ENCODE measurements at regions of chr17 and their contacts with region 1.

Region 1: GRCh38 chr17:79997011-79997660 is 38.5 kb downstream of the TBC1D16 start:
- DNase-seq: peak; percentile 46 to 96 (median 93)
- ATAC-seq: peak; percentile 97
- H3K4me3 ChIP-seq: peak overlapping the region; percentile 50
- H3K4me3 Mint-ChIP-seq: peak overlapping the region; percentile 72 to 88 (median 82)
- H3K27ac ChIP-seq: peak overlapping the region; percentile 85
- H3K27ac Mint-ChIP-seq: peak overlapping the region; percentile 92 to 99 (median 97)
- H3K4me1 ChIP-seq: peaks cover 39 to 45% of the 10 kb centered on the region in 2 donors
- H3K4me1 Mint-ChIP-seq: peaks cover 29 to 63% (median 46%) of the 10 kb centered on the region in 7 donors
- H3K27me3 ChIP-seq: no peaks in the 10 kb centered on the region
- H3K27me3 Mint-ChIP-seq: no peaks in the 10 kb centered on the region

Region 2: DNA sequence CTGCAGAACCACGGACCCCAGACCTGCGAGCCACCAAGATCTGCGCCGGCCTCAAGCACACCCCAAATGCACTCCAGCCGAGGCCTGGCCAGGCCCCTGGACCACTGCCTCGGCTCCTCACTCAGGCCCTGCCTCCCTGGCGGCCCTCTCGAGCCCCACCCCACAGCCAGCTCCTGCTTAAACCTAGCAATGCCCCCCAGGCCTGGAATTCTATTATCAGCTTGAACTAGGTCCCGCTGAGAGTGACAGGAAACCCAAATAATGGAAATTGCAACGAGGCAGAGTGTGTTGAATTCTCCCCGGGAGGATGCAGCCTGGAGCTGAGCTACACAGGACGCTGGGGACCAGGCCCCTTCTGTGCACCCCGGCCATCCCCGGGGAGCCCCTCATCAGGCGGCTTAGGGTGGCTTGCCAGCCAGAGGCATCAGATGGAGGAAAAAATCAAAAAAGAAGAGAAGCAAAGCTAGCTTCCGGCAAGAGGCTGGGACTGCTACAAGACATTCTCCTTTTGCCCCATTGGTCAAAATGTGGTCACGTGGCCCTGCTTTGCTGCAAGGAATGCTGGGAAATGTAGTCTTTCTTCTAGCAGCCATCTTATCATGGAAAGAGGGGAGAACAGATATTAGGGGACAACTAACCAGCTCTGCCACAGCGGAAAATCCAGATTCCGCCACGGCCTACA is 268.8 kb before region 1 on chr17:
- CTCF ChIA-PET with region 1: no interaction called
- POLR2A ChIA-PET with region 1: no interaction called
- intact Hi-C with region 1: loop called in 1 of 2 experiments (anchors 1 kb)
- DNase-seq: peak; percentile 62 to 91 (median 86)
- ATAC-seq: peak; percentile 91
- H3K4me3 ChIP-seq: peak overlapping the region; percentile 31
- H3K4me3 Mint-ChIP-seq: peak overlapping the region; percentile 53 to 85 (median 76)
- H3K27ac ChIP-seq: peak overlapping the region; percentile 56
- H3K27ac Mint-ChIP-seq: peak overlapping the region; percentile 72 to 92 (median 87)
- H3K4me1 ChIP-seq: peaks cover 4 to 12% of the 10 kb centered on the region in 2 donors
- H3K4me1 Mint-ChIP-seq: peaks cover 5 to 38% (median 21%) of the 10 kb centered on the region in 7 donors
- H3K27me3 ChIP-seq: no peaks in the 10 kb centered on the region
- H3K27me3 Mint-ChIP-seq: no peaks in the 10 kb centered on the region

Region 3: GRCh38 chr17:79796763-79797491 is 200.2 kb before region 1 on chr17 and contains the start of gene CBX8:
- CTCF ChIA-PET with region 1: no interaction called
- POLR2A ChIA-PET with region 1: interaction called, 10 read pairs
- intact Hi-C with region 1: loop called in 1 of 2 experiments (anchors 1 kb)
- DNase-seq: peak; percentile 97 to 99 (median 98)
- ATAC-seq: peak; percentile 95
- H3K4me3 ChIP-seq: peak within 1 kb of the TSS; percentile 54
- H3K4me3 Mint-ChIP-seq: peak within 1 kb of the TSS; percentile 84 to 92 (median 87)
- H3K27ac ChIP-seq: peak within 1 kb of the TSS; percentile 77
- H3K27ac Mint-ChIP-seq: peak within 1 kb of the TSS in 8 of 9 donors; percentile 75 to 95 (median 90)
- H3K4me1 ChIP-seq: peaks cover 31 to 39% of the 10 kb centered on the region in 2 donors
- H3K4me1 Mint-ChIP-seq: peaks cover 17 to 54% (median 34%) of the 10 kb centered on the region in 7 donors
- H3K27me3 ChIP-seq: peaks cover 29 to 32% of the 10 kb centered on the region in 2 donors
- H3K27me3 Mint-ChIP-seq: peaks cover 24 to 51% (median 34%) of the 10 kb centered on the region in 5 donors
- total RNA-seq, gene CBX8: 2.4 to 11.9 (median 3.0) TPM

Region 4: GRCh38 chr17:80008383-80008840 is 11.3 kb after region 1 on chr17:
- CTCF ChIA-PET with region 1: interaction called, 11 read pairs
- POLR2A ChIA-PET with region 1: interaction called, 3 read pairs
- intact Hi-C with region 1: loop called in 1 of 2 experiments (anchors 1 kb)
- DNase-seq: peak; percentile 30 to 82 (median 63)
- ATAC-seq: peak; percentile 89
- H3K4me3 ChIP-seq: no peak overlapping the region
- H3K4me3 Mint-ChIP-seq: no peak overlapping the region
- H3K27ac ChIP-seq: no peak overlapping the region
- H3K27ac Mint-ChIP-seq: peak overlapping the region in 1 of 9 donors; percentile 20
- H3K4me1 ChIP-seq: peaks cover 0 to 3% of the 10 kb centered on the region in 2 donors
- H3K4me1 Mint-ChIP-seq: peaks cover 5 to 13% (median 8%) of the 10 kb centered on the region in 7 donors
- H3K27me3 ChIP-seq: no peaks in the 10 kb centered on the region
- H3K27me3 Mint-ChIP-seq: no peaks in the 10 kb centered on the region

Region 5: GRCh38 chr17:80035943-80036714 is 39.0 kb after region 1 on chr17 and contains the start of gene CCDC40:
- CTCF ChIA-PET with region 1: no interaction called
- POLR2A ChIA-PET with region 1: no interaction called
- intact Hi-C with region 1: loop called in 1 of 2 experiments (anchors 1 kb)
- DNase-seq: peak; percentile 66 to 85 (median 78)
- ATAC-seq: peak; percentile 91
- H3K4me3 ChIP-seq: peak within 1 kb of the TSS; percentile 81
- H3K4me3 Mint-ChIP-seq: peak within 1 kb of the TSS; percentile 78 to 94 (median 85)
- H3K27ac ChIP-seq: peak within 1 kb of the TSS; percentile 76
- H3K27ac Mint-ChIP-seq: peak within 1 kb of the TSS; percentile 60 to 96 (median 84)
- H3K4me1 ChIP-seq: peaks cover 4 to 6% of the 10 kb centered on the region in 2 donors
- H3K4me1 Mint-ChIP-seq: peaks cover 5 to 18% (median 9%) of the 10 kb centered on the region in 7 donors
- H3K27me3 ChIP-seq: peaks cover 0 to 3% of the 10 kb centered on the region in 2 donors
- H3K27me3 Mint-ChIP-seq: peaks cover 0 to 63% (median 10%) of the 10 kb centered on the region in 5 donors
- total RNA-seq, gene CCDC40: 0.43 to 3.0 (median 0.79) TPM

Region 6: DNA sequence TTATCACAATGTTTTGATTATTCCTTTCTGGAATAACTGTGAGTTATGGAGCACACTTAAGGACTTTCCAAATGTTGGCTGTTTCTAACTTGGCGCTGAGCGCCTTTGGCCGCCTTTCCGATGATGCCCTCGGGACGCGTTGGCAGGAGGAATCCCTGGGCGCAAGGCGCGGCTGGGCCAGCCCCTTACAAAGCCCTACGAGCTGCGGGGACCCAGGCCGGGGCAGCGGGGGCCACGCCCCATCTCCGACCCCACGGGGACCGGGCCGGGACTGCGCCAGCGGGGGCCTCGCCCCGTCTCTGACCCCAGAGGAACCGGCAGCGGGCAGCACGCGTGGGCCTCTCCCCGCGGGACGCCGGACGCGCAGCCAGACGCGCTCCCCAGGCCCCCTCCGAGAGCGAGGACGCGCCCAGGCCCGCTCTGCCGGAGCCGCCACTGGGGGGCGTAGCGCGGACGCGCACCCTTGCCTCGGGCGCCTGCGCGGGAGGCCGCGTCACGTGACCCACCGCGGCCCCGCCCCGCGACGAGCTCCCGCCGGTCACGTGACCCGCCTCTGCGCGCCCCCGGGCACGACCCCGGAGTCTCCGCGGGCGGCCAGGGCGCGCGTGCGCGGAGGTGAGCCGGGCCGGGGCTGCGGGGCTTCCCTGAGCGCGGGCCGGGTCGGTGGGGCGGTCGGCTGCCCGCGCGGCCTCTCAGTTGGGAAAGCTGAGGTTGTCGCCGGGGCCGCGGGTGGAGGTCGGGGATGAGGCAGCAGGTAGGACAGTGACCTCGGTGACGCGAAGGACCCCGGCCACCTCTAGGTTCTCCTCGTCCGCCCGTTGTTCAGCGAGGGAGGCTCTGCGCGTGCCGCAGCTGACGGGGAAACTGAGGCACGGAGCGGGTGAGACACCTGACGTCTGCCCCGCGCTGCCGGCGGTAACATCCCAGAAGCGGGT is 104.1 kb after region 1 on chr17 and contains the start of gene GAA:
- CTCF ChIA-PET with region 1: no interaction called
- POLR2A ChIA-PET with region 1: interaction called, 4 read pairs
- intact Hi-C with region 1: loop called in 1 of 2 experiments (anchors 1 kb)
- DNase-seq: peak; percentile 84 to 97 (median 91)
- ATAC-seq: peak; percentile 97
- H3K4me3 ChIP-seq: peak within 1 kb of the TSS; percentile 79
- H3K4me3 Mint-ChIP-seq: peak within 1 kb of the TSS; percentile 85 to 93 (median 90)
- H3K27ac ChIP-seq: peak within 1 kb of the TSS; percentile 86
- H3K27ac Mint-ChIP-seq: peak within 1 kb of the TSS; percentile 81 to 93 (median 86)
- H3K4me1 ChIP-seq: peaks cover 10 to 16% of the 10 kb centered on the region in 2 donors
- H3K4me1 Mint-ChIP-seq: peaks cover 20 to 30% (median 27%) of the 10 kb centered on the region in 7 donors
- H3K27me3 ChIP-seq: no peaks in the 10 kb centered on the region
- H3K27me3 Mint-ChIP-seq: peaks cover 0 to 10% (median 0%) of the 10 kb centered on the region in 5 donors
- total RNA-seq, gene GAA: 18.5 to 67.8 (median 54.6) TPM

Region 7: DNA sequence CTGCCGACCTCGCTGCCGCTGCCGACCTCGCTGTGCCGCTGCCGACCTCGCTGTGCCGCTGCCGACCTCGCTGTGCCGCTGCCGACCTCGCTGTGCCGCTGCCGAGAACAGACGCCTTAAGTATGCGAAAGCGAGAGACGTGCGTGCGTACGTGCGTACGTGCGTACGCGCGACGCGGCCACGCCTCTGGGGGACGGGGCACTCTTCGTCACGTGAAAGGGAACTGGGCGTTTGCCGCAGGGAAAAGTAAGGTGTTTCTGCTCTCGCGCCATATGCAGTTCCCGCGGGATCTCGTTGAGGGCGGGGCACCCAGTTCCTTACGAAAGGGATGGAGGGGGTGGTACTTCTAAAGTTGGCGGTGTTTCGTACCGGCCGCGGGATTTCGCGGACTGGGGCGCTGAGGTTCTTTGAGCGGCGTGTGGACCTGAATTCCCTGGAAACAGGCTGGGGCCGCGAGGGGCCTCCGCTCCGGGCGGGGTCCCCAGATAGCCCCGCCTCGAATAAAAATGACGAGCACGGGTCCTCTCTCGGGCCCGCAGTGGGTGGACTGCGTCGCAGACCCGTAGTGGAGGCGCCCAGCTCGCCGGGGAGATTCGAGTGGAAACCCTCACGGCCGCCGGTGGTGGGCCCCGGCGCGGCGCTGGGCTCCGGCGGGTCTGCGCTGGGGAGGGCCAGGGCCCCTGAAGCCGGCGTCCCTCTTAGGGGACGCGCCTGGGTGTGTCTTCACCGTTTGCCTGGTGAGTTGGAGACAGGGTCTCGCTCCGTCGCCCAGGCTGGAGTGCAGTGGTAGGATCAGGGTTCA is 150.1 kb after region 1 on chr17 and contains the start of gene EIF4A3:
- CTCF ChIA-PET with region 1: interaction called, 3 read pairs
- POLR2A ChIA-PET with region 1: no interaction called
- intact Hi-C with region 1: loop called in 1 of 2 experiments (anchors 1 kb)
- DNase-seq: peak; percentile 84 to 98 (median 96)
- ATAC-seq: peak; percentile 97
- H3K4me3 ChIP-seq: peak within 1 kb of the TSS; percentile 64
- H3K4me3 Mint-ChIP-seq: peak within 1 kb of the TSS; percentile 81 to 100 (median 98)
- H3K27ac ChIP-seq: peak within 1 kb of the TSS; percentile 91
- H3K27ac Mint-ChIP-seq: peak within 1 kb of the TSS; percentile 68 to 100 (median 97)
- H3K4me1 ChIP-seq: peaks cover 19 to 21% of the 10 kb centered on the region in 2 donors
- H3K4me1 Mint-ChIP-seq: peaks cover 15 to 59% (median 44%) of the 10 kb centered on the region in 7 donors
- H3K27me3 ChIP-seq: no peaks in the 10 kb centered on the region
- H3K27me3 Mint-ChIP-seq: no peaks in the 10 kb centered on the region
- total RNA-seq, gene EIF4A3: 48.6 to 128 (median 75.9) TPM

Measured in naive thymus-derived CD4-positive, alpha-beta T cell (primary cell).